Naive thymus-derived CD4-positive, alpha-beta T cell (primary cell): ENCODE measurements at regions of chr14 and their contacts with region 1.

Region 1: DNA sequence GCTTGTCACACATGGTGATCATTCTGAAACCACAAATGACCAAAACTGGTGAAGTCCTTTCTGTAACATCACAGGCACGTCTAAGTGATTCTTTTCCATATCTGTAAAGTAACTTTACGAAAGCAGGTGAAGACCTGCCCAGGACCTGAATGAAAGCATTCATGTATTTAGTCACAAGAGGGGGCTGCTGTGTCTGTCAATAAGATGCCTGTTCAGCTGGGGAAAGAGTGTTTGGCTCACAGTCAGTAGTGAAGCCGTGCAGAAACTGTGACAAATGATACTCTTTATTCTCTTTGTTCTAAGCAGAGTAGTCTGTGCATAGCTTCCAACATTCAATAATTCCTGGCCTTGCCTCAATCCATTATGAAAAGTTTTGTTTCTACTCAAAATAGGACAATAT is 373.5 kb upstream of the OR4E1 start:
- DNase-seq: peak in 7 of 9 donors; percentile 44 to 71 (median 65)
- ATAC-seq: peak; percentile 91
- H3K4me3 ChIP-seq: no peak overlapping the region
- H3K4me3 Mint-ChIP-seq: peak overlapping the region; percentile 26 to 79 (median 70)
- H3K27ac ChIP-seq: peak overlapping the region; percentile 57
- H3K27ac Mint-ChIP-seq: peak overlapping the region; percentile 76 to 93 (median 90)
- H3K4me1 ChIP-seq: no peaks in the 10 kb centered on the region
- H3K4me1 Mint-ChIP-seq: peaks cover 7 to 61% (median 44%) of the 10 kb centered on the region in 7 donors
- H3K27me3 ChIP-seq: no peaks in the 10 kb centered on the region
- H3K27me3 Mint-ChIP-seq: peaks cover 0 to 1% (median 0%) of the 10 kb centered on the region in 5 donors

Region 2: DNA sequence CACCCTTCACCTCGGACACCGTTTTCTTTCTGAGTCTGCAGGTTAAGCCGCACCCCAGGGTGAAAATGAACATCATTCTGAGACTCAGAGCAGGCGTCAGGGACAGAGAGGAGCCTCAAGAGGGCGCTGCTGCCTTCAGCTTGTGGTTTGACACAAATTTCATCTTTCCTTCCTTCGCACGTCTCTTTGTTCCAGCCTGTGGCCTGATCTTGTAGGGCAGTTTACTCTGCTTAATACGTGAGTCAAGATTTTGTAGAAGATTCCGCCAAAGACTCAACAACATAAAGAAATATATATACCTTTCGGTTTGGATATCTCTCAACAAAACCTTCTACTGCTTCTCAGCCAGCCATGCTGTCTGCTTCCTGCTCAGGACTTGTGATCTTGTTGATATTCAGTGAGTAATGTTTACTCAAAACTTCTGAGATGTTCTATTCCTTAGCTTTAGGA is 44.2 kb before region 1 on chr14:
- CTCF ChIA-PET with region 1: interaction called, 11 read pairs
- POLR2A ChIA-PET with region 1: interaction called, 3 read pairs
- intact Hi-C with region 1: no loop called
- DNase-seq: peak; percentile 27 to 71 (median 66)
- ATAC-seq: peak; percentile 89
- H3K4me3 ChIP-seq: peak overlapping the region; percentile 65
- H3K4me3 Mint-ChIP-seq: peak overlapping the region; percentile 78 to 88 (median 84)
- H3K27ac ChIP-seq: peak overlapping the region; percentile 62
- H3K27ac Mint-ChIP-seq: peak overlapping the region; percentile 90 to 96 (median 94)
- H3K4me1 ChIP-seq: peaks cover 6 to 14% of the 10 kb centered on the region in 2 donors
- H3K4me1 Mint-ChIP-seq: peaks cover 3 to 31% (median 29%) of the 10 kb centered on the region in 7 donors
- H3K27me3 ChIP-seq: no peaks in the 10 kb centered on the region
- H3K27me3 Mint-ChIP-seq: no peaks in the 10 kb centered on the region

Region 3: GRCh38 chr14:22065347-22065746 is 18.2 kb after region 1 on chr14:
- CTCF ChIA-PET with region 1: interaction called, 12 read pairs
- POLR2A ChIA-PET with region 1: interaction called, 25 read pairs
- intact Hi-C with region 1: loop called (anchors 1 kb)
- DNase-seq: peak in 4 of 9 donors; percentile 26 to 50 (median 37)
- ATAC-seq: no peak
- H3K4me3 ChIP-seq: no peak overlapping the region
- H3K4me3 Mint-ChIP-seq: peak overlapping the region in 9 of 10 donors; percentile 33 to 74 (median 56)
- H3K27ac ChIP-seq: no peak overlapping the region
- H3K27ac Mint-ChIP-seq: peak overlapping the region in 7 of 9 donors; percentile 46 to 89 (median 84)
- H3K4me1 ChIP-seq: peaks cover 0 to 13% of the 10 kb centered on the region in 2 donors
- H3K4me1 Mint-ChIP-seq: peaks cover 4 to 44% (median 37%) of the 10 kb centered on the region in 7 donors
- H3K27me3 ChIP-seq: no peaks in the 10 kb centered on the region
- H3K27me3 Mint-ChIP-seq: no peaks in the 10 kb centered on the region

Region 4: GRCh38 chr14:22070119-22071011 is 23.2 kb after region 1 on chr14:
- CTCF ChIA-PET with region 1: interaction called, 12 read pairs
- POLR2A ChIA-PET with region 1: interaction called, 25 read pairs
- intact Hi-C with region 1: loop called (anchors 1 kb)
- DNase-seq: peak in 7 of 9 donors; percentile 41 to 74 (median 69)
- ATAC-seq: peak; percentile 77
- H3K4me3 ChIP-seq: peak overlapping the region; percentile 83
- H3K4me3 Mint-ChIP-seq: peak overlapping the region; percentile 90 to 97 (median 93)
- H3K27ac ChIP-seq: peak overlapping the region; percentile 63
- H3K27ac Mint-ChIP-seq: peak overlapping the region; percentile 90 to 97 (median 95)
- H3K4me1 ChIP-seq: peaks cover 9 to 13% of the 10 kb centered on the region in 2 donors
- H3K4me1 Mint-ChIP-seq: peaks cover 11 to 64% (median 59%) of the 10 kb centered on the region in 7 donors
- H3K27me3 ChIP-seq: no peaks in the 10 kb centered on the region
- H3K27me3 Mint-ChIP-seq: no peaks in the 10 kb centered on the region

Region 5: GRCh38 chr14:22084393-22085281 is 37.5 kb after region 1 on chr14:
- CTCF ChIA-PET with region 1: no interaction called
- POLR2A ChIA-PET with region 1: no interaction called
- intact Hi-C with region 1: loop called (anchors 1 to 5 kb)
- DNase-seq: peak in 6 of 9 donors; percentile 37 to 62 (median 52)
- ATAC-seq: peak; percentile 76
- H3K4me3 ChIP-seq: no peak overlapping the region
- H3K4me3 Mint-ChIP-seq: peak overlapping the region; percentile 41 to 76 (median 62)
- H3K27ac ChIP-seq: no peak overlapping the region
- H3K27ac Mint-ChIP-seq: peak overlapping the region; percentile 60 to 87 (median 75)
- H3K4me1 ChIP-seq: peaks cover 0 to 4% of the 10 kb centered on the region in 2 donors
- H3K4me1 Mint-ChIP-seq: peaks cover 2 to 40% (median 36%) of the 10 kb centered on the region in 7 donors
- H3K27me3 ChIP-seq: no peaks in the 10 kb centered on the region
- H3K27me3 Mint-ChIP-seq: no peaks in the 10 kb centered on the region

Region 6: DNA sequence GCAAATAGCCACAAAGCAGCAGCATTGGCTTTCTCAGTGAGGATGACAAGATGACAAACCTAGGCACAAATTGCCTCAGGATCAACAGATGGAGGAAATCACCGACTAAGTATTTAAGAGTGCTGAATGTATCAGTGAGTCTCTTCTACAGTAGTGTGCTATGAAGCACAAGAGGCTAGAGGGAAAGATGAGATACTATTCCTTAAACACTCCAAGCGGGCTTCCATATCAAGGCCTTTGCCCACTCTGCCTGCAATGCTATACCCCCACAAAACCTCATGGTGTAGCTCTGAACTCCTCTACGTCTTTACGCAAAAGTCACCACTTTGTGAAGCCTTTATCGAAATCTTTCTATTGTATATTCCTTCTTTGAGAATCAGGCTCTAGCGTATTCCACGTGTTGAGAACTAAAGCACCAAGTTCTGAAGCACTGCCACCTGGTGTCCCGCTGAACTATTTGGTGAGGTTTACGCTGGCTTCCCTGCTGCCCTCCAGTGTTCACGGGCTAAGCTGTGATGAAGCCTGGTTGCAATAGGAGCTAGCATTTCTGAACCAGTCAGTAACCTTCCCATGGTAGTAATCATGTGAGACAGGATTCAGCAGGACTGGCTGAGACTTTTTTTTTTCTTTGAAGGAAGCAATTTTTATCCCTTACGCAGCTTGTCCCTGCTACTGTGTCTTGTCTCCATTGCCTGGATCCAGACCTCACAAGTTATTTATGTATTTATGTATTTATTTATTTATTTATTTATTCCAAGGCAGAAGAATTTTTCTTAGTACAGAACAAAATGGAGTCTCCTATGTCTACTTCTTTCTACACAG is 53.0 kb after region 1 on chr14:
- CTCF ChIA-PET with region 1: interaction called, 11 read pairs
- POLR2A ChIA-PET with region 1: interaction called, 11 read pairs
- intact Hi-C with region 1: loop called (anchors 1 kb)
- DNase-seq: peak in 8 of 9 donors; percentile 31 to 74 (median 56)
- ATAC-seq: peak; percentile 83
- H3K4me3 ChIP-seq: no peak overlapping the region
- H3K4me3 Mint-ChIP-seq: peak overlapping the region in 3 of 10 donors; percentile 47 to 53 (median 48)
- H3K27ac ChIP-seq: no peak overlapping the region
- H3K27ac Mint-ChIP-seq: peak overlapping the region in 2 of 9 donors; percentile 25 to 49
- H3K4me1 ChIP-seq: peaks cover 3 to 29% of the 10 kb centered on the region in 2 donors
- H3K4me1 Mint-ChIP-seq: peaks cover 1 to 62% (median 48%) of the 10 kb centered on the region in 7 donors
- H3K27me3 ChIP-seq: no peaks in the 10 kb centered on the region
- H3K27me3 Mint-ChIP-seq: no peaks in the 10 kb centered on the region